Caco-2 (cell line): ENCODE measurements at regions of chr16 and their contacts with region 1.

Region 1: DNA sequence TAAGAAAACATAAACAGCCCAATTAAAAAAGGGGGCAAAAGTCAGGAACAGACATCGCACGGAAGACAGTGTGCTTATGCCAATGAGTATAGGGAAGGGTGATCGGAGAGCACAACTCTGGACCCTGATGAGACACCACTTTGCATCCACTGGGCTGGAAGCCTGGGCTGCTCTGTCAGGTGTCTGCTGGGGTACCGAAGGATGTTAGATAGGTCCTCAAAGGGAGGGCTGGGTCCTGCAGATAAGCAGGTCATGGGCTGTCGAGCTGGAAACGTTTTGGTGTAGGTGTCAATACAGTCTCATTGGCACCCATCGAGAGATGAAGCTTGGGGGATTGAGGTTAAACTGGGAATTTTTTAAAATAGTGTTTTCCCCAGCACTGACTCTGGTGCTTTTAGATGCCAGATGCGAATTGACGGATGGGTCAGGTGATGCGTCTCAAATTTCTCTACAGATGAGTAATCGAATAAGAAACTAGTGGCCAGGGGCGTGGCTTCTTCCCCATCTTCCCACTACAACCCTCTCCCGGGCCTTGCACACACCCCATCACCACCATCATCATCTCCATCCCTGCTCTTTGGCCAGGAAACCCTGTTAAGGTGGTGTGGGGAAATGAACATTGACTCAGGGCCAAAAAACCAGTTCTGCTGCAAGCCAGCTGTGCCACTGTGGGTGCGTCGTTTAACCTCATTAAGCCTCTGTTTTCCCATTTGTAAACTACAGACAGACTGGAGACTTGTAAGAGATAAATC is 47.8 kb upstream of the IRF8 start:
- DNase-seq: peak in 1 of 2 experiments; percentile 29
- H3K4me3 ChIP-seq: no peak overlapping the region
- H3K4me3 Mint-ChIP-seq: no peak overlapping the region
- H3K27ac Mint-ChIP-seq: peak overlapping the region; percentile 44
- H3K4me1 ChIP-seq: peaks cover 55% of the 10 kb centered on the region
- H3K4me1 Mint-ChIP-seq: peaks cover 61% of the 10 kb centered on the region
- H3K27me3 ChIP-seq: no peaks in the 10 kb centered on the region
- H3K27me3 Mint-ChIP-seq: no peaks in the 10 kb centered on the region
- CTCF ChIP-seq: no peak

Region 2: DNA sequence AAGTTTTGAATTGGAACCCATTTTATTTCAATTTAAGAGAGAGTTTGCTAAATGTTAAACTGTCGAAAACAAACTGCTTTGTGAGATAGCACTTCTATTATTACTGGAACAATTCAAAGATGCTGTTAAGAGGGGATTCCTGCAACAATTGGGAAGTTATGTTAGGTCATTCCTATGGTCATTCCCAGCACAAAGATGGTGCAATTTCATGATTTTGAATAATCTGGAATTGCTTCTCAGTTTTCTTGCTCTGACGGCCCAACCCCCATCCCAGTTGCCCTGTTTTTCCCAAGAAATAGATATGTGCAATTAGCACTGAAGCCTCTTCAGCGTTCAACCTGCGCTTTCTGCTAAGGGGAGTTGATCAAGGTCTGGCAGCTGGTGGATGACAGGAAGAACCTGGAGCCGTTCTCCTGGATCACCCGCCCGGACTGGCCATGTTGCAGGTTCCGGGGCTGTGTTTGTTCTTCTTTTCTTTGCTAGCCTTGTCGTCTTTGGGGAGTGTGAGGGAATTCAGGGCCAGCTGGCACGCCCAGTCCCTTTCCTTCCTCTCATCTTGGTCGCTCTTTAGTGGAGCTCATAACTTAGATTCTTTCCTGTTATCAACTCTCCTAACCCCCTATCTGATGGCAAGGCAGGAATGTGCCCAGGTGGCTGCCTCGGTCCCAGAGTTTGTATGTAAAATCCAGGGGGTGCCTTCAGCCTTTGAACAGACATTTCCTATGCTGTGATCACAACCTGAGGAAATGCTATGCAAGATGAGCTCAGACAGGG is 18.8 kb after region 1 on chr16:
- CTCF ChIA-PET with region 1: interaction called, 3 read pairs
- POLR2A ChIA-PET with region 1: no interaction called
- intact Hi-C with region 1: loop called (anchors 1 kb)
- DNase-seq: peak; percentile 78 to 80
- H3K4me3 ChIP-seq: peak overlapping the region; percentile 16; the same call in 1 of the 2 replicates
- H3K4me3 Mint-ChIP-seq: peak overlapping the region; percentile 86
- H3K27ac Mint-ChIP-seq: peak overlapping the region; percentile 99
- H3K4me1 ChIP-seq: peaks cover 13% of the 10 kb centered on the region
- H3K4me1 Mint-ChIP-seq: peaks cover 28% of the 10 kb centered on the region
- H3K27me3 ChIP-seq: no peaks in the 10 kb centered on the region
- H3K27me3 Mint-ChIP-seq: no peaks in the 10 kb centered on the region
- CTCF ChIP-seq: no peak

Region 3: GRCh38 chr16:85891033-85891772 is 40.0 kb after region 1 on chr16:
- CTCF ChIA-PET with region 1: interaction called, 3 read pairs
- POLR2A ChIA-PET with region 1: no interaction called
- intact Hi-C with region 1: loop called (anchors 1 kb)
- DNase-seq: peak; percentile 88 to 90
- H3K4me3 ChIP-seq: no peak overlapping the region
- H3K4me3 Mint-ChIP-seq: peak overlapping the region; percentile 58
- H3K27ac Mint-ChIP-seq: peak overlapping the region; percentile 77
- H3K4me1 ChIP-seq: peaks cover 50% of the 10 kb centered on the region
- H3K4me1 Mint-ChIP-seq: peaks cover 56% of the 10 kb centered on the region
- H3K27me3 ChIP-seq: no peaks in the 10 kb centered on the region
- H3K27me3 Mint-ChIP-seq: no peaks in the 10 kb centered on the region
- CTCF ChIP-seq: no peak

Region 4: GRCh38 chr16:85979605-85980004 is 128.4 kb after region 1 on chr16:
- CTCF ChIA-PET with region 1: no interaction called
- POLR2A ChIA-PET with region 1: interaction called, 3 read pairs
- intact Hi-C with region 1: loop called (anchors 2 kb)
- DNase-seq: no peak
- H3K4me3 ChIP-seq: no peak overlapping the region
- H3K4me3 Mint-ChIP-seq: no peak overlapping the region
- H3K27ac Mint-ChIP-seq: peak overlapping the region; percentile 3
- H3K4me1 ChIP-seq: peaks cover 34% of the 10 kb centered on the region
- H3K4me1 Mint-ChIP-seq: peaks cover 30% of the 10 kb centered on the region
- H3K27me3 ChIP-seq: no peaks in the 10 kb centered on the region
- H3K27me3 Mint-ChIP-seq: no peaks in the 10 kb centered on the region
- CTCF ChIP-seq: no peak